ENCODE measurements at regions of chr4 and their contacts with region 1.

Region 1: DNA sequence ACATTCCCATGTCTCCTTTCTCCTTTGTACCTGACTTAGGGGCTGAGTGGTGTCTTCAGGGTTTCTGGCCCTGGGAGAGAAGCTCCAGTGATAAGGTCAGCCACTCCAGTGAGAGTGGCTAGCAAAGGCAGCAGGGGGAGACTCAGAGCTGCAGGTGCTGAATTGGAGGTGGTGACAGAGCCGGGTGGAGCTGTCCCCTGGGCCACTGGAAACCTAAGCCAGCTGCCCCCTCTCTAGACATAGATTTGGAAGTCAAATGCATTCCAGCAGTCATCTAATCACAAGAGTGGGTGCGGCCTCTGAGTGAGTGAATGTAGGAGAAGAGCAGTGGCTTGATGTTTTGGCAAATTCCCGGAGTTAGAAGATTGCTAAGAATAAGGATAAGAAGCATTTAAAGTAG is 28.5 kb downstream of the TRIM2 start:
- DNase-seq: peak; percentile 70
- ATAC-seq: peak; percentile 99
- H3K4me3 Mint-ChIP-seq: no peak overlapping the region
- H3K27ac Mint-ChIP-seq: peak overlapping the region; percentile 75
- H3K4me1 Mint-ChIP-seq: peaks cover 38% of the 10 kb centered on the region
- H3K27me3 Mint-ChIP-seq: no peaks in the 10 kb centered on the region
- CTCF ChIP-seq: no peak

Region 2: DNA sequence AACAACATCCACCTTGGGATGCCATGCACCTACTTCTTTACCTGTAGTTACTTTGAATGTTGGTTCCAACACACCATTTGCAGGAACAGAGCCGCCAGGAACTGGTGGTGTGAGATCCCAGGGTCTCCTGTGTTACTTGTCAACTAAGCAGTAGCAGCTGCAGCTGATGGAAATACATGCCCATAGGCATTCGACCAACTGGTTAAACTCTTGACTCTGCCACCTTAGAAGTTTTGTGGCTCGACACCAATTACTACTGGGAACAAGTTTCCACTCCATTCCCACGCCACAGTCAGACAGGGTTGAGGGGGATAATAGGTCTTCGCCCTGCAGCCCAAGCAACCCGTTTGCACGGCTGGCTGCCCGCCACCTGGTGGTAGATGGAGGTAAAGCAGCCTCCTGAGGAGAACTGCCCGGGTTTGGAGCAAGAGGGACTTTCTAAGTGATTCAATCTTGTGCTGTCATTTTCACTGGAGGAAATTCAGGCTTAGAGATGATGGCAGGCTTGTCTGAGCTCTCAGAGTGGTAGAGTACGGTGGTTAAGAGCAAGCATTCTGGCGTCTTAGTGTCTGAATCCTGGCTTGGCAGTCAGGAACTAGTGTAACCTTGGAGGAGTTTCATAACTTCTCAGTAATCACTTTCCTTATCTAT is 147.7 kb before region 1 on chr4:
- CTCF ChIA-PET with region 1: no interaction called
- POLR2A ChIA-PET with region 1: no interaction called
- DNase-seq: peak; percentile 92
- ATAC-seq: peak; percentile 69
- H3K4me3 Mint-ChIP-seq: no peak overlapping the region
- H3K27ac Mint-ChIP-seq: no peak overlapping the region
- H3K4me1 Mint-ChIP-seq: peaks cover 59% of the 10 kb centered on the region
- H3K27me3 Mint-ChIP-seq: peaks cover 14% of the 10 kb centered on the region; the same call in 1 of the 2 replicates
- CTCF ChIP-seq: peak; percentile 97

Region 3: DNA sequence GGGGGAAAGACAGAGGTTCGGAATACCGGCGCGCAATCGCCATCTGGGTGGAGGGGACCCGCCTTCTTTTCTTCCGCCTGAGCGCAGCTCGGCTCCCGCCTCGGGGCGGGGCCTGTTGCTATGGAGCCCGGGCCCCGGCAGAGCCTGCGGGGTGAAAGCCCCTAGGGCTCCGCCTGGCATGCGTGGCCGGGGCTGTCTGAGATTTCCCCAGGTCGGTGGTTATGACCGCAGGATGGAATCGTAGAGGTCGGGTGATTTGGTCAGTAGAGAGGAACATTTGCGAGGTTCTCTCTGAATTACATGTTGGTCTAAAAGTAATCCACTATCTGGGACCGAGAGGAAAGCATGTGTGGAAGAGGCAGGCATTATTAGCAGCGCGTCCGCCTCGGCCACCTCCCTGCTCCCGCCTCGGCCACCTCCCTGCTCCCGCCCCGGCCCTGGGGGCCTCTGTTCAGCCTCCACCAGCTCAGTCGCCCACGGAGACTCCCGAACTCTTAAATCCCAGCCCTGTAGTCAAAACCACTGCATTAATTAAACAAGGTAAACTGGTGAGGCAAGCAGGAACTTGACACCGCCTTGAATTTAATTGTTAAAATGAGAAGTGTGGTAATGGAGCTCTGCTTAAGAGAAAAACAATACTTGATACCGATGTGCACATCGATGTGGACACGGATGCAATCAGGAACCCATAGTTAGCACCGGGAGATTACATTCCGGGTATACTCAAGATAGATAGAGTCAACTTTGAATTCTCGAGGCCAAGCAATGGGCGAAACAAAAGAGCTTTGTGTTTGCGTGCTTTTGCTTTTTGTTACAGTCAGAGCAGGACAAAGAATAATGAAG is 16.7 kb after region 1 on chr4:
- CTCF ChIA-PET with region 1: interaction called, 17 read pairs
- POLR2A ChIA-PET with region 1: interaction called, 13 read pairs
- DNase-seq: peak; percentile 88
- ATAC-seq: peak; percentile 94
- H3K4me3 Mint-ChIP-seq: peak overlapping the region; percentile 82
- H3K27ac Mint-ChIP-seq: peak overlapping the region; percentile 91
- H3K4me1 Mint-ChIP-seq: peaks cover 51% of the 10 kb centered on the region
- H3K27me3 Mint-ChIP-seq: no peaks in the 10 kb centered on the region
- CTCF ChIP-seq: no peak

Region 4: GRCh38 chr4:153296040-153296823 is 63.5 kb after region 1 on chr4:
- CTCF ChIA-PET with region 1: interaction called, 10 read pairs
- POLR2A ChIA-PET with region 1: no interaction called
- DNase-seq: peak; percentile 17
- ATAC-seq: peak; percentile 63
- H3K4me3 Mint-ChIP-seq: no peak overlapping the region
- H3K27ac Mint-ChIP-seq: peak overlapping the region; percentile 72
- H3K4me1 Mint-ChIP-seq: peaks cover 28% of the 10 kb centered on the region
- H3K27me3 Mint-ChIP-seq: no peaks in the 10 kb centered on the region; the same call in 1 of the 2 replicates
- CTCF ChIP-seq: no peak

Region 5: DNA sequence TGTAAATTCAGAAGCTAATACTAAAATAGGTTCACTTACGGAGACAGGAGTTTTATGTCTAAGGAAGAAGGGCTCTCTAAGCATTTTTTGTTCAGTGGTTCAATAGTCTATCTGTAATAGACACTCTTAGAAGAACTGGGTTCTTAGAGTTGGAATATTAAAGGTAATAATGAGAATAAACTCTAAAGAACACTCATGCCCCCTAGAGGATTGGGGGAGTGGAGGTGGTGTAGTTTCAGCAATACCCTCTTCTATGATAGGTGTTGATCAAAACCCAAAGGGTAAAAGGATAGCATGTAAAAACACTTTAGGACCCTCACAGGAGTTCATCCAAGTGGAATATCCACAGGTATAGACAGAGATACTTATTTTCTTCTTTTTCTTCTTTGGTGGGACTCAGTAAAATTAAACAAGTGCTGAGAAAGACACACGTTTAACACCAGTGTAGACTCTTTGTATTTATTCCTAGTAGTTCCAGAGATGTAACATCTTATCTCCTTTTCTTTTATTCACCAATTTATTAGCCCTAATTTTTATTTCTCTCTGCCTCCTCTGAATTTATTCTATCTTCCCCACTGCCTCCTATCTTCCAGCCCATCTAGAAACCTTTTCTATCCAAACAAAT is 86.0 kb after region 1 on chr4:
- CTCF ChIA-PET with region 1: interaction called, 14 read pairs
- POLR2A ChIA-PET with region 1: no interaction called
- DNase-seq: no peak
- ATAC-seq: peak; percentile 76
- H3K4me3 Mint-ChIP-seq: no peak overlapping the region
- H3K27ac Mint-ChIP-seq: peak overlapping the region; percentile 31; the same call in 1 of the 2 replicates
- H3K4me1 Mint-ChIP-seq: no peaks in the 10 kb centered on the region
- H3K27me3 Mint-ChIP-seq: no peaks in the 10 kb centered on the region
- CTCF ChIP-seq: peak; percentile 55

Measured in WTC11 (cell line).